ENCODE measurements at regions of chr1 and their contacts with region 1.

Region 1: GRCh38 chr1:89274411-89274857 is 1.8 kb upstream of the GBP5 start:
- DNase-seq: peak in 3 of 5 donors; percentile 25 to 38 (median 37)
- H3K4me3 ChIP-seq: no peak overlapping the region
- H3K27ac ChIP-seq: peak overlapping the region in 1 of 2 donors; percentile 64
- H3K4me1 ChIP-seq: no peaks in the 10 kb centered on the region
- H3K27me3 ChIP-seq: no peaks in the 10 kb centered on the region
- CTCF ChIP-seq: no peak
- EP300 ChIP-seq: peak; percentile 8
- POLR2A ChIP-seq: no peak

Region 2: GRCh38 chr1:89198491-89199072 is 75.9 kb before region 1 on chr1 and contains the start of gene GBP4:
- intact Hi-C with region 1: loop called in 1 of 4 experiments (anchors 10 kb)
- DNase-seq: peak; percentile 49 to 63 (median 57)
- H3K4me3 ChIP-seq: peak within 1 kb of the TSS; percentile 42
- H3K27ac ChIP-seq: peak within 1 kb of the TSS; percentile 60 to 82
- H3K4me1 ChIP-seq: peaks cover 7% of the 10 kb centered on the region
- H3K27me3 ChIP-seq: no peaks in the 10 kb centered on the region
- CTCF ChIP-seq: no peak
- EP300 ChIP-seq: no peak
- POLR2A ChIP-seq: no peak
- total RNA-seq, gene GBP4: 5.7 to 23.7 (median 8.4) TPM

Region 3: DNA sequence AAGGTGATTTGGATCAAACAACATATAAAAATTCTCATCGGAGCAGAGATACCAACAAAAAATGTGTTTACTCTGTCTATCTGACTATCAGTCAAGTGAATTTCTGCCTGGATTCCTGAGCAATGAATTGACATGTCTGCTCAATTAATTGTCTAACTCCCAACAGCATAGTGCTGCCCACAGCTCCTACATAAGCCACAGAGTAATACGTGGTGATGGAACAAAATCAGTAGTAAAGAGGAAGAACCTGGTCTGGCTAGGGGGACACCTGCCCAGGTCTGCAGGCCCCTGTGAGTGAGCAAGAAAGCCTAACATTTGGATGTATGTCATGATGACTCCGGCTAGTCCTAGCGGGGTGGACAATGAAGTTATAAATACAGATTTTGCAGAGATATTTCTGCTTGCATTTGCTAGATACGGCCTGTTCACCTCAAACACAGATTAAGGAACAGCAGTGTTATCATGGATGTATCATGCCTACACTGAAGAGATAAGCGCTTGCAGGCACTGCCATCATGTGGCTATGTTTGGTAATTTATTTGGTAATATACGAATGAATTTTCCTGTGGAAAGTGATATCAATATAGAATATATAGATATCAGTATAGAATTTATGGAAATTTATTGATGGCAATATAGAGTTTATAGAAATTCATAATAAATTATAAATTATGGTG is 180.5 kb after region 1 on chr1:
- intact Hi-C with region 1: no loop called
- DNase-seq: peak in 4 of 5 donors; percentile 20 to 38 (median 31)
- H3K4me3 ChIP-seq: no peak overlapping the region
- H3K27ac ChIP-seq: no peak overlapping the region
- H3K4me1 ChIP-seq: no peaks in the 10 kb centered on the region
- H3K27me3 ChIP-seq: no peaks in the 10 kb centered on the region
- CTCF ChIP-seq: peak; percentile 20 to 67 (median 46)
- EP300 ChIP-seq: no peak
- POLR2A ChIP-seq: no peak

Region 4: GRCh38 chr1:89598450-89599331 is 324.3 kb after region 1 on chr1:
- intact Hi-C with region 1: no loop called
- DNase-seq: no peak
- H3K4me3 ChIP-seq: no peak overlapping the region
- H3K27ac ChIP-seq: no peak overlapping the region
- H3K4me1 ChIP-seq: peaks cover 4% of the 10 kb centered on the region
- H3K27me3 ChIP-seq: no peaks in the 10 kb centered on the region
- CTCF ChIP-seq: peak; percentile 22 to 44 (median 27)
- EP300 ChIP-seq: no peak
- POLR2A ChIP-seq: no peak

Measured in ovary (tissue), 10 donors.